ENCODE measurements at regions of chr19 and their contacts with region 1.

Region 1: DNA sequence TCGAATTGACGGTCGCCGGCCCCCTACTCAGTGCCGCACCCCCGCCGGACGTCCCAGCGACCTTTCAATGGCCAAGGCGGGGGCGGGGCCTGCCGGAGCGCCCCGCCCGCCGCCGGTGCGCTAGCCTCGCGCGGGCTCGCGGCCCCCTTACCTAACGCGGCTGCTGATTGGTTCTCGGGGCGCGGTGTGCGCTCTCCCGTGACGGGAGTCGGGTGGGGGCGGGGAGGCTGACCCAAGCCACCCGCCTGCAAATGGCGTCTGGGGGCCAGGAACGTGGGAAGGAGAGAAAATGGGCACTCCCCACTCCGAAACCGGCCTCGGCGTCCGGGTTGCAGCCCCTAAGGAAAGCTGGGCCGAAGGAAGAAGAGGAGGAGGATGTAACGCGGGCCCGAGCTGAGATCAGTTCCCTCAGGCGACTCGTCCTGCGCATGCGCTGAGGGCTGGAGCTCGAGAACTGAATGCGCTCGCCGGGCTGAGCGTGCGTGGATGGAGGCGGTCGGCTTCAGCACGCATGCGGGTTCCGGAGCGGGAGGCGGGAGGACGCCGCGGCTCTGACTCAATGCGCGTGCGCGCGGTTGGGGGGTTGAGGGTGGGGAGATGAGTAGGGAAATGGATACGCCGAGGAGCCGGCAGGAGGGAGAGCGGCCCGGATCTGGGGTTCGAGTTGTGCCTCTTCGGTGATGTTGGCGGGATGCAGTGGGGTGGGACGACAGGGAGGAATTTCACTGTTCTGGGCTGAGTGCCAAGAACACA is at the start of gene SMG9:
- H3K4me3 ChIP-seq: peak within 1 kb of the TSS; percentile 60
- H3K27ac ChIP-seq: peak within 1 kb of the TSS; percentile 100
- H3K4me1 ChIP-seq: peaks cover 32% of the 10 kb centered on the region
- CTCF ChIP-seq: no peak; the same call in 1 of the 2 replicates

Region 2: GRCh38 chr19:43687660-43687997 is 67.0 kb before region 1 on chr19:
- CTCF ChIA-PET with region 1: no interaction called
- POLR2A ChIA-PET with region 1: interaction called, 14 read pairs
- H3K4me3 ChIP-seq: no peak overlapping the region
- H3K27ac ChIP-seq: peak overlapping the region; percentile 45; the same call in 1 of the 2 replicates
- H3K4me1 ChIP-seq: peaks cover 13% of the 10 kb centered on the region
- CTCF ChIP-seq: no peak

Region 3: GRCh38 chr19:43774103-43774939 is 19.6 kb after region 1 on chr19:
- CTCF ChIA-PET with region 1: interaction called, 151 read pairs
- POLR2A ChIA-PET with region 1: interaction called, 9 read pairs
- H3K4me3 ChIP-seq: no peak overlapping the region
- H3K27ac ChIP-seq: no peak overlapping the region
- H3K4me1 ChIP-seq: peaks cover 10% of the 10 kb centered on the region; the same call in 1 of the 2 replicates
- CTCF ChIP-seq: peak; percentile 80

Region 4: DNA sequence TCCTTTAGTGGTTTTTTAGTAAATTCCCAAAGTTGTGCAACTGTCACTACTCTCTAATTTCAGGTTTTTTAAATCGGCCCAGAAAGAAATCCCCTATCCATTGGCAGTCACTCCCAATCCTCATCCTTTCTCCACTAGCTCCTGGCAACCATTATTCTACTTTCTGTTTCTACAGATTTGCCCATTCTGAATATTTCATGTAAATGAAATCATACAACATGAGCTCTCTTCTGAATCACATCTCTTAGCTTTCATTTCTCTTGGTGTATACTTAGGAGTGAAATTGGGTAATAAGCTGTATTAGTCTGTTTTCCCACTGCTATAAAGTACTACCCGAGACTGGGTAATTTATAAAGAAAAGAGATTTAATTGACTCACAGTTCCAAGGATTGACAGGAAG is 287.5 kb after region 1 on chr19:
- CTCF ChIA-PET with region 1: no interaction called
- POLR2A ChIA-PET with region 1: no interaction called
- H3K4me3 ChIP-seq: no peak overlapping the region
- H3K27ac ChIP-seq: no peak overlapping the region
- H3K4me1 ChIP-seq: no peaks in the 10 kb centered on the region
- CTCF ChIP-seq: no peak